ENCODE measurements at regions of chr16 and their contacts with region 1.

Region 1: GRCh38 chr16:71249399-71249798 is 18.9 kb upstream of the HYDIN start:
- DNase-seq: no peak
- ATAC-seq: peak; percentile 46

Region 2: GRCh38 chr16:71185347-71185746 is 64.1 kb before region 1 on chr16:
- intact Hi-C with region 1: no loop called
- DNase-seq: no peak
- ATAC-seq: no peak

Region 3: GRCh38 chr16:71218306-71218963 is 31.0 kb before region 1 on chr16:
- intact Hi-C with region 1: loop called (anchors 1 kb)
- DNase-seq: no peak
- ATAC-seq: no peak

Region 4: DNA sequence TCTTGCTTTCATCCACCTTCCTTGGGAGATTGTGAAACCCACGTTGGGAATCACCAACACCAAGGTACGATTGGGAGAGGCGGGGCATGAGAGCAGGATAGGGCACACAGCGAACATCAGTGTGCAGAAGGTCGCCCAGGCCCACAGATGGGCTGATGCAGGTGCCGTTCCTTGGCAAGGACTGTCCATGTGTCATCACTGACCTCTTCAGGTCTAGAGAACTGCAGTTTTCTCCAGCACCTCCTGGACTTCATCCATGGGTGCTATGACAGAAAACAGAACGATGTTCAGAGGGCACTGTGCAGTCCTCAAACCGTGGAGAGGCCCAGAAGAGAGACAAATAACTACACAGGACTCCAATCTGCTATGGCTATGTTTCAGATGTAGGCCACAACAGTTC is 351.4 kb after region 1 on chr16:
- intact Hi-C with region 1: no loop called
- DNase-seq: no peak
- ATAC-seq: no peak

Region 5: GRCh38 chr16:71865173-71865863 is 615.9 kb after region 1 on chr16:
- intact Hi-C with region 1: no loop called
- DNase-seq: no peak
- ATAC-seq: no peak